Activated CD4-positive, alpha-beta memory T cell treated with anti-CD3 and anti-CD28 coated beads, Interleukin-2, amount 10 ng/mL, durations not matched to agents 7 days and 5 days (primary cell): ENCODE measurements at regions of chr2 and their contacts with region 1.

Region 1: DNA sequence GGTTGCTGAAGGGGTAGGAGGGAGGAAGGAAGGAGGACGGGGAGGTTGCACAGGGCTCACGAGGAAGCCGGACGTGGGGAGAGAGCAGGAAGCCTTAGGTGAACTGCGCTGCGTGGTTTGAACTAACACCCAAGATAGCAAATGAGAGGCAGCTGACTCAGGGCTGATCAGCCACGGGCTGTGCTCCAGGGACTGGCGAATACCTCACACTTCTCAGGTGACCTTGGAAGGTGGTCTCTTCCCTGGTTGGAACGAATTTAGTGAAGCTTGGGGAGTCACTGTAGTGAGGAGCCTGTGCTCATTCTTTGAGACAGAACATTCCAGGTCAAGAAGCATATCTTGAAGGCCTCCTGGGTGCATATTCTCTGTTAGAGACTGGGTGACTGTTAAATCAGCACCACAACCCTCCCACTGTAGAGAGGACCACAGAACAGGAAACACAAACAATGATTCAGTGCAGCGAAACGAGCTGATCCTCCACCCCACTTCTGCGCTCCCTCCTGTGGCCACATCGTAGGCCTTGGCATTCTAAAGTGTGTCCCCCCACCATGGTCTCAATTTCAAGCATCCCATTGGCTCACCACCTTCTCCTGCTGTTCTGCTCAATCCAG is 33.8 kb downstream of the TOGARAM2 start:
- DNase-seq: peak; percentile 86
- H3K4me3 Mint-ChIP-seq: peak overlapping the region; percentile 89
- H3K27ac Mint-ChIP-seq: peak overlapping the region; percentile 98
- H3K4me1 Mint-ChIP-seq: peaks cover 81% of the 10 kb centered on the region
- H3K27me3 Mint-ChIP-seq: no peaks in the 10 kb centered on the region

Region 2: DNA sequence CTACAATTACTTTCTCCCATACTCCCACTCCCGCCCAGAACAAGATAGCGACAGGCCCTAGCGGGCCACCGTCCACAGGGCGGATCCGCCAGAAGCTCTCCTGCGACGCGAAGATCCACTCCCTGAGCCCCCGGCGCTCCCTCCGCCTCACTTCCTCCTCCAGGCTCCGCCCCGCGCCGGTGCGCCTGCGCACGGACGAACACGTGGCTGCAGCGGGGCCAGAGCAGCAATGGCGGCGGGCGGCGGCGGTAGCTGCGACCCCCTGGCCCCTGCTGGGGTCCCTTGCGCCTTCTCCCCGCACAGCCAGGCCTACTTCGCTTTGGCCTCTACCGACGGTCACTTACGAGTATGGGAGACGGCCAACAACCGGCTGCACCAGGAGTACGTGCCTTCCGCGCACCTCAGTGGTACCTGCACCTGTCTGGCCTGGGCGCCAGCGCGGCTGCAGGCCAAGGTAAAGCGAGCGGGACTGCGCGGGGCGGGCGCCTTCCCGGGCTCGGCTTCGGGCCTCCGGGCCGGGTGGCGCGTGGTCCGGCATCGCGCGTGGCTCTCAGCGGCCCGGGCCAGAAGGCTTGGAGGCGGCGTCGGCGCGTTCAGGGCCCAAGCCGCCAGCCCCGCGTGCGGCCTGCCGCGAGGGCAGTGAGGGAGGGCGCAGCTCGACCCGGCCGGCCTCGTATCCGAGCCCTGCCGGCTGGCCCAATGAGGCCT is 120.3 kb before region 1 on chr2 and contains the start of gene WDR43:
- CTCF ChIA-PET with region 1: no interaction called
- POLR2A ChIA-PET with region 1: interaction called, 10 read pairs
- DNase-seq: peak; percentile 98
- H3K4me3 Mint-ChIP-seq: peak within 1 kb of the TSS; percentile 91
- H3K27ac Mint-ChIP-seq: peak within 1 kb of the TSS; percentile 87
- H3K4me1 Mint-ChIP-seq: peaks cover 43% of the 10 kb centered on the region
- H3K27me3 Mint-ChIP-seq: no peaks in the 10 kb centered on the region
- total RNA-seq, gene WDR43: 45.5 to 47.2 TPM

Region 3: GRCh38 chr2:29000481-29000880 is 14.4 kb before region 1 on chr2:
- CTCF ChIA-PET with region 1: interaction called, 18 read pairs
- POLR2A ChIA-PET with region 1: interaction called, 87 read pairs
- DNase-seq: peak; percentile 65
- H3K4me3 Mint-ChIP-seq: no peak overlapping the region
- H3K27ac Mint-ChIP-seq: peak overlapping the region; percentile 14
- H3K4me1 Mint-ChIP-seq: peaks cover 28% of the 10 kb centered on the region
- H3K27me3 Mint-ChIP-seq: no peaks in the 10 kb centered on the region

Region 4: GRCh38 chr2:29033172-29033571 is 18.3 kb after region 1 on chr2:
- CTCF ChIA-PET with region 1: interaction called, 8 read pairs
- POLR2A ChIA-PET with region 1: interaction called, 19 read pairs
- DNase-seq: no peak
- H3K4me3 Mint-ChIP-seq: no peak overlapping the region
- H3K27ac Mint-ChIP-seq: no peak overlapping the region
- H3K4me1 Mint-ChIP-seq: peaks cover 28% of the 10 kb centered on the region
- H3K27me3 Mint-ChIP-seq: no peaks in the 10 kb centered on the region

Region 5: DNA sequence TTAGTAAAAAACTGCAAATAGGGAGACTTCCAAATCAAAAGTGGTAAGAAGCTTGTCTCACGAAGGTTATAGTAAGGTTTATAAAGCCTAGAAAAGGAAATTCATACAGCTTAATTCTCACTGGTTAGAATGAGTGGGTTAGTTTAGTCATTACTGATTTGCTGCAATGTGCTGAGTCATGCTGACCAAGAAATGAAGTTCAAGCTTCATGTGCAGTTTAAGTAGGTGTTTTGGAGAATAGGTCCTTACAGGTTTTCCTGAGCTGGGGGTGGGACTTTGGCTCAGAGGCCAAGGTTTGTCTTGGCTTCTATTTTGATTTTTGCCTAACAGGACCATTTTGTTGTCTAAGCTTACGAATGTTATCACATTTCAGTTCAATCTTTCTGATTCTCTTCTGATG is 115.4 kb after region 1 on chr2:
- CTCF ChIA-PET with region 1: interaction called, 3 read pairs
- POLR2A ChIA-PET with region 1: interaction called, 19 read pairs
- DNase-seq: peak; percentile 37
- H3K4me3 Mint-ChIP-seq: peak overlapping the region; percentile 23
- H3K27ac Mint-ChIP-seq: peak overlapping the region; percentile 33
- H3K4me1 Mint-ChIP-seq: peaks cover 35% of the 10 kb centered on the region
- H3K27me3 Mint-ChIP-seq: no peaks in the 10 kb centered on the region